ENCODE measurements at regions of chr7 and their contacts with region 1.

Region 1: DNA sequence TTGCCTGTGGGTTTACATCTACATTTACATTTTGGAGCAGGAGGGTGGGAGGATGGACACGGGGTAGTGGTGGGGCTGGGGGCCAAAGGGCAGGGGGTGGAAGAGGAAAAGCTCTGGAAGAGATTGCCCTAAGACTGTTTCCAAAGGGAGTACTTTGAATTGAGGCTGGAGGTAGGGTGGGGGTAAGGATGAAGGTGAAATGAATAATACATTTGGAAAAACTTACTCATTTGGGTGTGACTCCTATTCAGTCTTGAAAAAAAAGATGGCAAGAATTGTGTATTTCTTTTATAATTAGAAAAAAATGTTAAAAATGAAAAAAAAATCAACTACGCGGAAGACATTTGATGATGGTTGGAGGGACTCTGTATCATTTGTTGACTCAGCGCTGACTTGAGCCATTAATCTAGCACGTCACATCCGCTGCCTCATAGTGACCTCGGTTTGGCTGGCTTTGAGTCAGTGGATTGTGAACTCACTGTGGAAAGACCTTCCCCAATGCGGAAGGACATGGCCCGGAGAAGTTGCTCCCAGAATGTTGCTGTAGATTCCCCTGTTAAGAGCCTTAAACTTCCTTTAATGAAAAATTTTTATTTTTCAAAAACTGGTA is 2.8 kb downstream of the FAM180A start:
- DNase-seq: peak; percentile 77 to 96
- H3K4me3 ChIP-seq: peak overlapping the region; percentile 20; the same call in 1 of the 2 replicates
- H3K27ac ChIP-seq: peak overlapping the region; percentile 98
- H3K4me1 ChIP-seq: peaks cover 38% of the 10 kb centered on the region
- H3K27me3 ChIP-seq: no peaks in the 10 kb centered on the region
- CTCF ChIP-seq: no peak

Region 2: GRCh38 chr7:135602304-135602703 is 143.5 kb before region 1 on chr7:
- CTCF ChIA-PET with region 1: no interaction called
- POLR2A ChIA-PET with region 1: no interaction called
- intact Hi-C with region 1: no loop called
- DNase-seq: no peak
- H3K4me3 ChIP-seq: no peak overlapping the region
- H3K27ac ChIP-seq: no peak overlapping the region; the same call in 1 of the 2 replicates
- H3K4me1 ChIP-seq: no peaks in the 10 kb centered on the region
- H3K27me3 ChIP-seq: no peaks in the 10 kb centered on the region
- CTCF ChIP-seq: no peak

Region 3: GRCh38 chr7:135678612-135679575 is 66.9 kb before region 1 on chr7:
- CTCF ChIA-PET with region 1: no interaction called
- POLR2A ChIA-PET with region 1: no interaction called
- intact Hi-C with region 1: loop called (anchors 2 kb)
- DNase-seq: peak; percentile 65 to 88
- H3K4me3 ChIP-seq: no peak overlapping the region
- H3K27ac ChIP-seq: peak overlapping the region; percentile 51
- H3K4me1 ChIP-seq: peaks cover 25% of the 10 kb centered on the region
- H3K27me3 ChIP-seq: no peaks in the 10 kb centered on the region
- CTCF ChIP-seq: no peak

Region 4: GRCh38 chr7:135710417-135711138 is 35.2 kb before region 1 on chr7:
- CTCF ChIA-PET with region 1: interaction called, 4 read pairs
- POLR2A ChIA-PET with region 1: interaction called, 8 read pairs
- intact Hi-C with region 1: loop called (anchors 5 kb)
- DNase-seq: no peak
- H3K4me3 ChIP-seq: no peak overlapping the region
- H3K27ac ChIP-seq: no peak overlapping the region
- H3K4me1 ChIP-seq: peaks cover 51% of the 10 kb centered on the region
- H3K27me3 ChIP-seq: no peaks in the 10 kb centered on the region
- CTCF ChIP-seq: peak; percentile 74

Region 5: GRCh38 chr7:135817583-135817982 is 71.8 kb after region 1 on chr7:
- CTCF ChIA-PET with region 1: no interaction called
- POLR2A ChIA-PET with region 1: no interaction called
- intact Hi-C with region 1: no loop called
- DNase-seq: no peak
- H3K4me3 ChIP-seq: no peak overlapping the region
- H3K27ac ChIP-seq: no peak overlapping the region
- H3K4me1 ChIP-seq: no peaks in the 10 kb centered on the region
- H3K27me3 ChIP-seq: no peaks in the 10 kb centered on the region
- CTCF ChIP-seq: no peak

Region 6: GRCh38 chr7:135855846-135856245 is 110.0 kb after region 1 on chr7:
- CTCF ChIA-PET with region 1: no interaction called
- POLR2A ChIA-PET with region 1: no interaction called
- intact Hi-C with region 1: no loop called
- DNase-seq: no peak
- H3K4me3 ChIP-seq: no peak overlapping the region
- H3K27ac ChIP-seq: no peak overlapping the region
- H3K4me1 ChIP-seq: peaks cover 30% of the 10 kb centered on the region
- H3K27me3 ChIP-seq: no peaks in the 10 kb centered on the region
- CTCF ChIP-seq: no peak

Region 7: DNA sequence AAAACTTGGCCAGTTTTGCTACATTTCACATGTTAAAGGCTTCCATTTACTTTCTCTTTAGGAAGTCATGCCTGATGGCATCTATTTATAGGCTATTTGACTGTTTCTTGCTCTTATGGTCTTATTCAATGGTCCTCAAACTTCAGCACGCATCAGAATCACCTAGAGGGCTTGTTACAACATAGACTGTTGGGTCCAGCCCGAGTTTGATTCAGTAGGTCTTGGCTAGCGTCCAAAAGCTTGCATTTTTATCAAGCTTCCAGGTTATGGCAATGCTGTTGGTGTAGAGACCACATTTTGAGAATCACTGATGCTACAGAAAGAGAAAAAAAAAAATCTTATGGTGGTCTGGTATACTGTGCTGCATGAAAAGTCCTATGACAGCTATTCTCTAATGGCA is 179.4 kb after region 1 on chr7:
- CTCF ChIA-PET with region 1: no interaction called
- POLR2A ChIA-PET with region 1: interaction called, 15 read pairs
- intact Hi-C with region 1: no loop called
- DNase-seq: no peak
- H3K4me3 ChIP-seq: no peak overlapping the region
- H3K27ac ChIP-seq: peak overlapping the region; percentile 75
- H3K4me1 ChIP-seq: peaks cover 29% of the 10 kb centered on the region
- H3K27me3 ChIP-seq: no peaks in the 10 kb centered on the region
- CTCF ChIP-seq: no peak